ENCODE measurements at regions of chr12 and their contacts with region 1.

Region 1: DNA sequence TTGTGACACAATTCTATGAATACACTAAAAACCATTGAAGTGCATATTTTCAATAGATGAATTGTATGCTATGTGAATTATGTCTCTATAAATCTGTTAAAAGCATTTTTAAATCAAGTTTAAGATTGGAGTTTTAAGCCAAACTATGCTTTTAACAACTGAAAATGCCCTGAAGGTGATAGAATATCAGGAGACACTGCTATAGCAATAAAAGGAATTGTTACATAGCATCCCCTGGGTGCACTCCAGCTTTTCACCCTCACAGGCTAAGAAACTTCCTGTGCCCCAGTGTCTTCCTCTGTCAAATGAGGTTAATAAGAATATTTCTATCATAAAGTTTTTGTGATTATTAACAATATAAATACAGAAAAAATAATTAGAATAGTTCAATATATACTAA is 472.7 kb upstream of the TMPO start:
- DNase-seq: no peak
- ATAC-seq: no peak
- H3K4me3 ChIP-seq: no peak overlapping the region
- H3K27ac ChIP-seq: no peak overlapping the region
- H3K4me1 ChIP-seq: no peaks in the 10 kb centered on the region
- H3K27me3 ChIP-seq: no peaks in the 10 kb centered on the region
- CTCF ChIP-seq: no peak
- POLR2A ChIP-seq: no peak
- RAD21 ChIP-seq: no peak

Region 2: DNA sequence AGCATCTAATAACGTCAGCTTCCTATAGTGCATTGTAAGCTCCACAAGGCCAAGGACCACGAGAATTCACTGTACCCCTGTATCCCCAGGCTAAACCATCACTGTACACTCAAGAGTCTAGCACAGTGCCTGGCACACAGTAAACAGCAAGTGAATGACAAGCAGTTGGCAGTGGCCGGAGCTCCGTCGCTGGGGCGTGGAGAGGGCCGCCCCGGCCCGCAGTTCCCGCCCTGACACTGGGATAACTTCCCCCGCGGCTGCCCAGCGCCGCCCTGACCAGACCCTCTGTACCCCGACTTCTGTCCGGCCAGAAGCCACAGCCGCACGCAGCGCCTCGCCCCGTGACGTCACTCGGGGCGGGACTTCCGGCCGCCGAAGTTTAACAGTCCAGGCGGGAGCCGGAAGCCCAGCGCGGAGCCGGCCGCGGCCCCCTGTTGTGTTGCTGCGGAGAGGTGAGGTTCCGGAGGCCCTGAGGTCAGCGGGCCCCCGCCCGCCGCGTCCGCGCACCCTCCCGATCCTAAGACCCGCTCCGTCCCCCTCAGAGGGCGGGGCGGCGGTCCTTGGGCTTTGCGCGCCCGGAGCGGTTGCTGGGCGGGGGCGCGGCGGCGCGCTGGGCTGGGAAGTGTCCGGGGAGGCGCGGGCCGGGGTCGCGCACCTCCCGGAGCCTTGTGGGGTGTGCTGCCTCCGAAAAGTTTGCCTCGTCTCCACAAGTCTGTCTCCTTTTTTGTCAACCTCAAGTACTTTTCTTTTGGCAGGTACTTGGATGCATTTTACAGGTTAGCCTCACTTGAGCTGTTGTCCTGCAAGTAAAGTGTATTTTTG is 1135.6 kb before region 1 on chr12 and contains the start of gene NEDD1:
- CTCF ChIA-PET with region 1: no interaction called
- POLR2A ChIA-PET with region 1: no interaction called
- dilution Hi-C with region 1: no loop called
- in situ Hi-C with region 1: no loop called
- intact Hi-C with region 1: no loop called
- DNase-seq: peak; percentile 67
- ATAC-seq: peak; percentile 94
- H3K4me3 ChIP-seq: peak within 1 kb of the TSS; percentile 86
- H3K27ac ChIP-seq: peak within 1 kb of the TSS; percentile 61
- H3K4me1 ChIP-seq: peaks cover 5% of the 10 kb centered on the region; the same call in 1 of the 2 replicates
- H3K27me3 ChIP-seq: no peaks in the 10 kb centered on the region
- CTCF ChIP-seq: no peak
- POLR2A ChIP-seq: peak; percentile 53; the same call in 1 of the 2 replicates
- RAD21 ChIP-seq: no peak
- total RNA-seq, gene NEDD1: 48.0 and 60.5 TPM in 2 replicates

Region 3: GRCh38 chr12:97246368-97246767 is 796.3 kb before region 1 on chr12:
- CTCF ChIA-PET with region 1: no interaction called
- POLR2A ChIA-PET with region 1: no interaction called
- dilution Hi-C with region 1: no loop called
- in situ Hi-C with region 1: no loop called
- intact Hi-C with region 1: no loop called
- DNase-seq: no peak
- ATAC-seq: no peak
- H3K4me3 ChIP-seq: no peak overlapping the region
- H3K27ac ChIP-seq: no peak overlapping the region
- H3K4me1 ChIP-seq: no peaks in the 10 kb centered on the region
- H3K27me3 ChIP-seq: no peaks in the 10 kb centered on the region
- CTCF ChIP-seq: no peak
- POLR2A ChIP-seq: no peak
- RAD21 ChIP-seq: no peak

Region 4: GRCh38 chr12:98062464-98063245 is 20.0 kb after region 1 on chr12:
- CTCF ChIA-PET with region 1: no interaction called
- POLR2A ChIA-PET with region 1: no interaction called
- dilution Hi-C with region 1: no loop called
- in situ Hi-C with region 1: no loop called
- intact Hi-C with region 1: loop called (anchors 1 kb)
- DNase-seq: no peak
- ATAC-seq: no peak
- H3K4me3 ChIP-seq: no peak overlapping the region
- H3K27ac ChIP-seq: no peak overlapping the region
- H3K4me1 ChIP-seq: no peaks in the 10 kb centered on the region
- H3K27me3 ChIP-seq: no peaks in the 10 kb centered on the region
- CTCF ChIP-seq: no peak
- POLR2A ChIP-seq: no peak
- RAD21 ChIP-seq: no peak